ENCODE measurements at regions of chr5 and their contacts with region 1.

Region 1: DNA sequence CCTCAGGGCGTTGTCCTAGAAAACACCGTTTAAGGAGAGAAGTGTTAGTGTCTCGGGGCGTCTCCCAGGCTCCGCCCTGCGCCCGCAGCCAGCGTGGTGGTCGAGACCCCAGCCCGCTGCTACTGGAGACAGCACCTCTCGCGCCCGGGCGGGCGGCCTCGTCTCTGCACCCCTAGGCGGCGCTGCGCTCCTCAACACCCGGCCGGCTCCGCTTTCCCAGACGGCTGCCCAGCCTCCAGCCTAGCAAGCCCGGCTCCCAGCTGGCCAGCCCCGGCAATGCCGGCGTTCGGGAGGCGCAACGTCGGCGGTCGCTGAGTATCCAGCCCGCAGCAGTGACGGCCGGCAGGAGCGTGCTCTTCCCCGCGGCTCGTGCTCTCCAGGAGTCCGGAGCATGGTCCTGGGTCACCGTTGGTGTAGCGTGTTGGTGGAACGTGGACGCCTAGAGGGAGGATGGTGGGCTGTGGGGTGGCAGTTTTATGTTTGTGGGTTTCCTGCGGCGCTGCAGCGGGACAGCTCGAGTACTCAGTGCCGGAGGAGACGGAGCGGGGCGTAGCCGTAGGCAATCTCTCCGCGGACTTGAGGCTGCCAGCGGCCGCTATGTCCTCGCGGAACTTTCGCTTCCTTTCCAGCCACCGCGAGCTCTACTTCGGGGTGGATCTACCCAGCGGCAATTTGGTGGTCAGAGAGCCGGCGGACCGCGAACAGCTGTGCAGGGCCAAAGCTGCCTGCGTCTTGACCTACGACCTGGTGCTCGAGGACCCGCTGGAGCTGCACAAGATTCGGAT is 536 bp downstream of the PCDHAC1 start:
- DNase-seq: peak; percentile 95
- H3K4me3 ChIP-seq: peak overlapping the region; percentile 54 to 62
- H3K27ac ChIP-seq: peak overlapping the region in 1 of 2 experiments; percentile 79; a peak in 2 of 4 replicates
- H3K4me1 ChIP-seq: peaks cover 0 to 7% of the 10 kb centered on the region in 2 experiments; a peak in 2 of 4 replicates
- H3K27me3 ChIP-seq: no peaks in the 10 kb centered on the region
- CTCF ChIP-seq: peak; percentile 70
- EP300 ChIP-seq: no peak
- RAD21 ChIP-seq: peak; percentile 79

Region 2: GRCh38 chr5:140780512-140780911 is 146.1 kb before region 1 on chr5:
- CTCF ChIA-PET with region 1: no interaction called
- POLR2A ChIA-PET with region 1: no interaction called
- DNase-seq: no peak
- H3K4me3 ChIP-seq: no peak overlapping the region
- H3K27ac ChIP-seq: no peak overlapping the region
- H3K4me1 ChIP-seq: no peaks in the 10 kb centered on the region
- H3K27me3 ChIP-seq: no peaks in the 10 kb centered on the region
- CTCF ChIP-seq: no peak
- EP300 ChIP-seq: no peak
- RAD21 ChIP-seq: no peak

Region 3: GRCh38 chr5:140875066-140876065 is 51.3 kb before region 1 on chr5 and contains the start of gene PCDHA12:
- CTCF ChIA-PET with region 1: interaction called, 29 read pairs
- POLR2A ChIA-PET with region 1: no interaction called
- DNase-seq: peak; percentile 70
- H3K4me3 ChIP-seq: peak within 1 kb of the TSS; percentile 56 to 64
- H3K27ac ChIP-seq: peak within 1 kb of the TSS in 1 of 2 experiments; percentile 50; a peak in 2 of 4 replicates
- H3K4me1 ChIP-seq: no peaks in the 10 kb centered on the region; a peak in 2 of 4 replicates
- H3K27me3 ChIP-seq: no peaks in the 10 kb centered on the region
- CTCF ChIP-seq: peak; percentile 62
- EP300 ChIP-seq: no peak
- RAD21 ChIP-seq: peak; percentile 84
- polyA plus RNA-seq, gene PCDHA12: 0.54 and 0.70 TPM in 2 replicates

Region 4: DNA sequence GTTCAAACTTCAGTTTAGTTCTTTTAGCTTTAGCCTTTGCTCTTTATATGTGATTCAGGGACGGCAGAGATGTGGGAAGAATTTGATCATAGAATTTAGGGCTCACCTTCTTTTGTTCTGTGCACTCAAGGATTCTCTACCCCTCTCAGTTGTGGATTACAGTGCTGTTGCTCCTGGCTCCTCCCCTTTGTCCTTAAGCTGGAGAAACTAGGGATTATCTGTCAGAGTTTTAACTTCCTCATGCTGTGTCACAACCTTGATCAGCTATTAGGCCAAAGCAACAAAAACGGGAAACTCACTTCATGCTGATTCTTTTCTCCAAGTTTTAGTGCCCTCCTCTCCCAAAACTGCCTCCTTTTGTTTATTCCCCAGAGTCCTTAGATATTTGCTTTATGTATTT is 26.6 kb after region 1 on chr5:
- CTCF ChIA-PET with region 1: interaction called, 11 read pairs
- POLR2A ChIA-PET with region 1: no interaction called
- DNase-seq: no peak
- H3K4me3 ChIP-seq: no peak overlapping the region
- H3K27ac ChIP-seq: no peak overlapping the region
- H3K4me1 ChIP-seq: no peaks in the 10 kb centered on the region
- H3K27me3 ChIP-seq: no peaks in the 10 kb centered on the region
- CTCF ChIP-seq: no peak
- EP300 ChIP-seq: no peak
- RAD21 ChIP-seq: no peak

Region 5: DNA sequence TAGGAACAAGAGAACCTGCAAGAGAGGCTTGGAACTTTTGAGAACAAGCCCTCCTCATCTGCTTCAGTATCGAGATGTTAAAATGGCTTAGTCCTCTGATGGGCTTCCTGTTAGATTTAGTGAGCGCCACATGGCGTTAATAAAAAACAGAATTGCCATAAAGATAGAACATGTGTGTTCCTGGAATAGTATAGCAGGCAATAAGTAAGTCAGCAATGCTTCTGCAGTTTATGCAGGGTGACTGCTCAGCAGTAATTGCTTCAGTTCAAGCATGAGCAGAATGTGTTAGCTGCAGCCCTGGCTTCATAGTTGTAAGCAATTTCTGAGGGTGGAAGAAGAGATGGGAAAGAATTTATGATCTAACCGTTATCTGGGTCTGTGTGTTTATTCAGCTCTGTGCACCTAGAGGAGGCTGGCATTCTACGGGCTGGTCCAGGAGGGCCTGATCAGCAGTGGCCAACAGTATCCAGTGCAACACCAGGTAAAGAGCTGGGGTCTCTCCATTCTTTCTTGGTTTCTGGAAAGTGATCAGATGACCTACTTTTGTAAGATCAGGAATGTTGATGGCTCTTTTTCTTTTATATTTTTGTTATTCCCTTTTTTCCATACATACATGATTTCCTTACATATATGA is 55.6 kb after region 1 on chr5:
- CTCF ChIA-PET with region 1: interaction called, 12 read pairs
- POLR2A ChIA-PET with region 1: interaction called, 3 read pairs
- DNase-seq: peak; percentile 47
- H3K4me3 ChIP-seq: no peak overlapping the region
- H3K27ac ChIP-seq: peak overlapping the region in 1 of 2 experiments; percentile 96; a peak in 2 of 4 replicates
- H3K4me1 ChIP-seq: peaks cover 9 to 31% of the 10 kb centered on the region in 2 experiments; a peak in 3 of 4 replicates
- H3K27me3 ChIP-seq: no peaks in the 10 kb centered on the region
- CTCF ChIP-seq: no peak
- EP300 ChIP-seq: peak in 1 of 2 experiments; percentile 80; a peak in 2 of 4 replicates
- RAD21 ChIP-seq: peak; percentile 41; the same call in 1 of the 2 replicates

Region 6: DNA sequence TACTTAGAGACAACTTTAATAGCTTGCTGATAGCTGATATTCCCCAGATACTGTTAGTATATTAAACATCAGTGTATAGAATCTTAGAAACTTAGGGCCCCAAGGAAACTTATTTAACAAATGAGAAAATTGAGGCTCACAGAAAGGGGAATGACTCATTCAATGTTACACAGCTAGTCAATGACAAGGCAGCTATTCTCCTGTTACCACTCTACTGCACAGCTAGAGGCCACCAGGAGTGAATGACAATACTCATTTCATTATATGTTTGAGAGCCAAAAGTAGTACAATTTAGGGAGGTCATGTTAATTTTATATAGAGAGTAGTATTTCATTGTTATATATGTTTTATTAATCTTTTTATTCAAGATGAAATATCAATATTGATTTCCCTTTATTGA is 91.3 kb after region 1 on chr5:
- CTCF ChIA-PET with region 1: interaction called, 10 read pairs
- POLR2A ChIA-PET with region 1: no interaction called
- DNase-seq: no peak
- H3K4me3 ChIP-seq: no peak overlapping the region
- H3K27ac ChIP-seq: no peak overlapping the region
- H3K4me1 ChIP-seq: no peaks in the 10 kb centered on the region
- H3K27me3 ChIP-seq: no peaks in the 10 kb centered on the region
- CTCF ChIP-seq: no peak
- EP300 ChIP-seq: no peak
- RAD21 ChIP-seq: no peak

Measured in SK-N-SH (cell line).